ENCODE measurements at regions of chr17 and their contacts with region 1.

Region 1: DNA sequence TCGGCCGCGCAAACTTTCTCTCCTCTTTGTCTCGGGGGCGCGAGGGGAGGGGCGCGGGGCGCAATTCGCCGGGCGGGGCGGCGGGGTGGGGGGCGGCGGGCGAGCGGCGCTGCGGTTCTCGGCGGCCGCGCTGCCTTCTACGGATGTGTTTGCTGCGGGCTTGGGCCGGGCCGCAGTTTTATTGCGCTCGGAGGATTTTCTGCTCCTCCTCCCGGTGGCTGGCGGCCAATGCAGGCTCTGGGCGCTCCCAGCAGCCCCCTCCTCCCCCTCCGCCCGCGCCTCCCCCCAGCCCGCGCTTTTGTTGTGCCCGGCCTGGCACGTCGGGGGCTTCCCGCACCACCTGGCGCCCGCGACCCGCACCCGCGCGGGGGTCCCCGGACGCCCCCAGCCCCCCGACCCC is at the start of gene TIMP2:
- DNase-seq: peak; percentile 84 to 87
- ATAC-seq: peak; percentile 72 to 76
- H3K4me3 ChIP-seq: peak within 1 kb of the TSS; percentile 86
- H3K27ac ChIP-seq: peak within 1 kb of the TSS; percentile 97 to 99
- H3K4me1 ChIP-seq: peaks cover 46% of the 10 kb centered on the region
- CTCF ChIP-seq: no peak
- EP300 ChIP-seq: no peak
- POLR2A ChIP-seq: peak; percentile 77
- RAD21 ChIP-seq: peak in 1 of 2 experiments; percentile 34; a peak in 2 of 5 replicates
- polyA plus RNA-seq, gene TIMP2: 68.1 and 77.8 TPM in 2 replicates

Region 2: DNA sequence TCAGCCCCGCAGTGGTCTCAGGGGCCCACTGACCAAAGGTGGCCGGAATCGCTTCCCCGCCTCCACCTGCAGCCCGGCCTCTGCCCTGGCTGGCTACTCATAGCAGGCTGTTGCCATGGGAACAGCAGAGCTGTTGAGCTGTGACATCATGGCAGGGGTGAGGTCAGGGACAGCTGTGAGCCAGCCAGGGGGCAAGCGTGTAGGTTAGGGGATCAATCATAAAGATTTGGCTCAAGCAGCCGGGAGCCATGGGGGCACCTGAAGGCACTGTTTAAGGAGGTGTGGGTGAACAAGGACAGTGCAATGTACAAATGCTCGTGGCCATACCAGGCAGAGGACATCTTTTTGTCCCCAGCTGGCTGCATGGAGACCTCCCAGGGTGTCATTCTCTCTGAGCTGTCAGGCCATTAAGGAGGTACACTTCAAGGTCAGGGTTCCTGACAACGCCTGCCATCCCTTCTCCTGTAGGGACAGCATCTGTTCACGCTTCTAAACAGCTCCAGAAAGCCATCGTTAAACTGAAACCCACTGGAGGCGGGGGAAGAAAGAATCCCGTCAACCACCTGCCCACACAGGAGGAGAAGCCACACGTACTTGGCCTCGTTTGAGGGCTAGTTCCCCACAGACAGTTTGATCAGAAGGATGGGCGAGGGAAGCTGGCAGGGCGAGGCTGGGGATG is 22.0 kb before region 1 on chr17 and contains the start of gene CEP295NL:
- CTCF ChIA-PET with region 1: interaction called, 14 read pairs
- POLR2A ChIA-PET with region 1: interaction called, 5 read pairs
- DNase-seq: peak; percentile 57 to 66
- ATAC-seq: peak; percentile 47 to 78
- H3K4me3 ChIP-seq: no peak within 1 kb of the TSS
- H3K27ac ChIP-seq: peak within 1 kb of the TSS in 1 of 2 experiments; percentile 2; a peak in 1 of 6 replicates
- H3K4me1 ChIP-seq: peaks cover 26% of the 10 kb centered on the region
- CTCF ChIP-seq: no peak
- EP300 ChIP-seq: no peak
- POLR2A ChIP-seq: no peak
- RAD21 ChIP-seq: no peak
- polyA plus RNA-seq, gene CEP295NL: 0.09 and 0.10 TPM in 2 replicates

Region 3: DNA sequence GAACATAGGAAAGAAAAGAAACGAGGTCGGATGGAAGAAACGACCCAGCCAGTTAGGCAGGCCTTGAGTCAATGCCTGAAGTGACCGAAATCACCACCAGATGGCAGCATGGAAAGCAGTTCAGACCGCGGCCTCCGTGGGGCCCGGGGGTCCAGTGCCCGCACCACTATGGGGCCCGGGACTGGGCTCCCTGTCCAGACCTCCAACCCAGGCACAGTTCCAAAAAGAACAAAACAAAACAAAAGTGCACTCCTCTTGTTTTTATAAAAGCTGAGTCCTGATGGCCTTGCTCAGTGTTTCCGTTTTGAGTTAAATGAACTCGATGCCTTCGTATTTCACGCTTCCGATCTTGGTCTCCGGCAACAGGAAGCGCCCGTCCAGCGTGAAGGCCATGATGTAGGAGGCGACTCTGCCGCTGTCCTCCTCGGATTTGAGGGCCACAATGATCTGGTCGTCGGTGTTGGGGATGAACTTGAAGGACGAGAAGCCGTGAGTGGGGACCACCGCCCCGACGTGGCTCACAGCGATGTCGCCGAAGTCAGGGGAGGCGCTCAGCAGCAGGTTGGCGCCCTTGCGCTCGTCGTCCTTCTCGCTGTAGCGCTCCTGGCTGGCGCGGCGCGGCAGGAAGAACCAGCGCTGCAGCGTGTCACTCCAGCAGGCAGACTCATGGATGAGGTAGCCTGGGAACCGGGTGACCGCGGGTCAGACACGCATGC is 68.2 kb after region 1 on chr17:
- CTCF ChIA-PET with region 1: no interaction called
- POLR2A ChIA-PET with region 1: no interaction called
- DNase-seq: peak; percentile 69 to 78
- ATAC-seq: peak; percentile 64 to 87; a peak in 4 of 6 replicates
- H3K4me3 ChIP-seq: no peak overlapping the region
- H3K27ac ChIP-seq: no peak overlapping the region
- H3K4me1 ChIP-seq: no peaks in the 10 kb centered on the region; the same call in 2 of the 3 replicates
- CTCF ChIP-seq: peak; percentile 89
- EP300 ChIP-seq: no peak
- POLR2A ChIP-seq: no peak
- RAD21 ChIP-seq: peak; percentile 49 to 54

Measured in A549 (cell line).